Colonic mucosa (tissue), 4 donors: ENCODE measurements at regions of chr2 and their contacts with region 1.

Region 1: GRCh38 chr2:75064691-75065396 is 106.4 kb downstream of the POLE4 start:
- DNase-seq: peak; percentile 57
- H3K4me3 ChIP-seq: no peak overlapping the region
- H3K27ac ChIP-seq: no peak overlapping the region
- H3K4me1 ChIP-seq: no peaks in the 10 kb centered on the region
- H3K27me3 ChIP-seq: no peaks in the 10 kb centered on the region
- CTCF ChIP-seq: peak; percentile 84

Region 2: DNA sequence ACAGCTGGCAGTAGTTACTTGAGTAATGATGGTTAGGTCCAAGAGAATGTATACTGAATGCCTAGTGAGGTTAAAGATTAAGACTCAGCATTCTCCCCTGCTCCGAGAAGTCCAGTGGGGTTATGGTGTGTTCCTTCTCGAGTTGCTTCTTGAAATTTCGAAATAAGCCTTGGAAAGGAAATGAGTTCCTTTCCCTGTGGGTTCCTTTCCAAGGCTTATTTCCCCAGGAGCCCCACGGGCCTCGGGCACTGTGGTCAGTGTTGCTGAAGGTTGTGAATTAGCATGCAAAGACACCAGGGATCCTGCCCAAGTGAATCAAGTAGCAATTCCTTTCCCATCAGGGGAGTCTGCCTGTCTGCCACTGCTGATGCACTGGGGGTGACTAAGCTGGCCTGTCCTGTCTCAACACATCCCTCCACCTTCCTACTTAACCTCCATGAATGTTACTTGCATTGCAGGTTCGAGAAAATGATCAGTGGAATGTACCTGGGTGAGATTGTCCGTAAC is 177.3 kb before region 1 on chr2:
- intact Hi-C with region 1: no loop called
- DNase-seq: no peak
- H3K4me3 ChIP-seq: no peak overlapping the region
- H3K27ac ChIP-seq: no peak overlapping the region
- H3K4me1 ChIP-seq: no peaks in the 10 kb centered on the region
- H3K27me3 ChIP-seq: no peaks in the 10 kb centered on the region
- CTCF ChIP-seq: no peak

Region 3: DNA sequence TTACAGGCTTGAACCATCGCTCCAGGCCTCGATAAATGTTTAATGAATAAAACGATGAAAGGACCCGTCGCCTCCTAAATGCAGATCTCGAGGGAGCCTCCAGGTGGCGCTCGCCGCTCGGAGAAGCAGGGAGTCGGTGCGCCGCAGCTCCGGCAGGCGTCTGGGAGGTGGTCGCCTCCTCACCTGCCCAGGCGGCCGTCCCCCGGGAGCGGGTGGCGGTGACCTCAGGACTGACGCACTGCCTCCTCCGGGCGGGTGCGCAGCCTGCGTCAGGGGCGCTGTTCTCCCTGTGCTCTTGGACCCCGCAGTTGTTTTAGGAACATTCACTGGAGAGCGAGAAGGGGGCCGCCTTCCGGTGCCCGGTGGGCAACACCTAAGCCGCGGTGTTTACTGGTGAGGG is 145.0 kb before region 1 on chr2:
- intact Hi-C with region 1: loop called (anchors 10 kb)
- DNase-seq: peak; percentile 73
- H3K4me3 ChIP-seq: peak overlapping the region; percentile 31
- H3K27ac ChIP-seq: no peak overlapping the region
- H3K4me1 ChIP-seq: no peaks in the 10 kb centered on the region
- H3K27me3 ChIP-seq: no peaks in the 10 kb centered on the region
- CTCF ChIP-seq: peak; percentile 75

Region 4: DNA sequence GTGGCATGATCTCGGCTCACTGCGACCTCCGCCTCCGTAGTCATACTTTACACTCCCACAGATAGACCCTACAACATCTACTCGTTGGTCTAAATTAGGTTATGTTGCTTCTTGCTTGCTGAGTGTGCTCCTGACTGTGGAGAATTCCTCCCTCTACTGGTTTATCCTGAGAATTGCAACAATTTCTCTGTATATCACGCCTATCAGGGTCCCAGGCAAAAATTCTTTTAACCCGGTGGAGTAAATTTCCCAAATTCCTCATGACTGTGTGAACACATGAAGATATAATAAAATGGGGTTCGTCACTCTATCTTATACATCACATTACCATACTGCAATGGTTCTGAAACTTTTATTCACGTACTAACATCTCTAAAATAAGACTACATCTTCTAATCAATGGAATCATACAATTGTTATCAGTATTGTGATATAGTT is 339.2 kb after region 1 on chr2:
- intact Hi-C with region 1: loop called (anchors 10 kb)
- DNase-seq: no peak
- H3K4me3 ChIP-seq: no peak overlapping the region
- H3K27ac ChIP-seq: no peak overlapping the region
- H3K4me1 ChIP-seq: no peaks in the 10 kb centered on the region
- H3K27me3 ChIP-seq: no peaks in the 10 kb centered on the region
- CTCF ChIP-seq: peak; percentile 58

Region 5: DNA sequence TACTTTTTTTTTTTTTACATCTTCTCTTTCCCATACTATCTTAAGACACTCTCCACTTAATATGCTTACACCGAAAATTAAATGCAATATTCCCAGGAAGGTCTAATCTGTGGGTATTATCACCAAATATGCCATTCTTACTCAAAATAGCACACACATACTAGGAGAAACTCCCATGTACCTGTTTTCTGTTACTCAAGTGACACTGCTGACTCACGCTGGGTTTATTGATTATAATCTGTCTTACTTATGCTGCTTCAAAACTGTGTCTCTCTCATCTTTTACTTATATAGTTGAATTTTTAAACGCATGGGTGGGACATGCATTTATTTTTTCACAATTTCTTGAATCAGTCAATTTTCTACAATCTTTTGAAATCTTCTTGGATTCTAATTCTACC is 611.6 kb after region 1 on chr2:
- intact Hi-C with region 1: no loop called
- DNase-seq: no peak
- H3K4me3 ChIP-seq: no peak overlapping the region
- H3K27ac ChIP-seq: no peak overlapping the region
- H3K4me1 ChIP-seq: no peaks in the 10 kb centered on the region
- H3K27me3 ChIP-seq: no peaks in the 10 kb centered on the region
- CTCF ChIP-seq: no peak